K562 (cell line): ENCODE measurements at regions of chr10 and their contacts with region 1.

Region 1: DNA sequence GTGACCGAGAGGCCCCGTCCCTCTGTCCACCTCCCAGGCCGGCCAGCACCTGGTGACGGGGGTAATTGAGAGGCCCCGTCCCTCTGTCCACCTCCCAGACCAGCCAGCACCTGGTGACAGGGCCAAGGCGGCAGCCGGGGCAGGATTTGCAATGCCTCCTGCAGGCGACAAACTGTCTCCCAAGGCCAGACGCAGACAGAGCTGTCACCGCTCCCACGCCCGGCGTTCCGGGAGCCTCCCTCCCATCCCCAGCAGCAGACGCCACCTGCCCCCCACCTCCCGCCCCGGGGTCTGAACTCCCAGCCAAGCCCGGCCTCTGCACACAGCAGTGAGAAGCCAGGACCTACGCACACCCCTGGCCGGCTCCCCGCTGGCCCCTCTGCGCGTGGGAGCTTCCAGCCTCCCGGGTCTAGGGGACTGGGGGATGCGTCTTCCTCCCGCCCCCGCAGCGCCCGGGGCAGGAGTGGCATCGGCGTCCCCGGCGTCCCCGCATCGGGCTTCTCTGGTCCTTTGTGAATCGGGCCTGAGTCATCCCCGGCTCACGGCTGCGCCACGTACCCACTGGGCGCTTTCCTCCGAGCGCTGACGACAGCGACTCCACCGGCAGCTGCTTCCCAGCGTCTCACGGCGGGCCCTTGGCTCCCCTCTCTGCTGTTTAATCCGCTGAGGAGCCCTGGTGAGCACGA is 95.1 kb upstream of the DIP2C start:
- DNase-seq: peak in 3 of 4 experiments; percentile 13 to 45 (median 45)
- ATAC-seq: no peak
- H3K4me3 ChIP-seq: no peak overlapping the region
- H3K27ac ChIP-seq: no peak overlapping the region
- H3K4me1 ChIP-seq: peaks cover 3 to 45% of the 10 kb centered on the region in 2 experiments; a peak in 3 of 5 replicates
- H3K27me3 ChIP-seq: peaks cover 41 to 84% of the 10 kb centered on the region in 2 experiments; a peak in 4 of 5 replicates
- CTCF ChIP-seq: no peak
- EP300 ChIP-seq: no peak
- POLR2A ChIP-seq: no peak
- RAD21 ChIP-seq: no peak

Region 2: DNA sequence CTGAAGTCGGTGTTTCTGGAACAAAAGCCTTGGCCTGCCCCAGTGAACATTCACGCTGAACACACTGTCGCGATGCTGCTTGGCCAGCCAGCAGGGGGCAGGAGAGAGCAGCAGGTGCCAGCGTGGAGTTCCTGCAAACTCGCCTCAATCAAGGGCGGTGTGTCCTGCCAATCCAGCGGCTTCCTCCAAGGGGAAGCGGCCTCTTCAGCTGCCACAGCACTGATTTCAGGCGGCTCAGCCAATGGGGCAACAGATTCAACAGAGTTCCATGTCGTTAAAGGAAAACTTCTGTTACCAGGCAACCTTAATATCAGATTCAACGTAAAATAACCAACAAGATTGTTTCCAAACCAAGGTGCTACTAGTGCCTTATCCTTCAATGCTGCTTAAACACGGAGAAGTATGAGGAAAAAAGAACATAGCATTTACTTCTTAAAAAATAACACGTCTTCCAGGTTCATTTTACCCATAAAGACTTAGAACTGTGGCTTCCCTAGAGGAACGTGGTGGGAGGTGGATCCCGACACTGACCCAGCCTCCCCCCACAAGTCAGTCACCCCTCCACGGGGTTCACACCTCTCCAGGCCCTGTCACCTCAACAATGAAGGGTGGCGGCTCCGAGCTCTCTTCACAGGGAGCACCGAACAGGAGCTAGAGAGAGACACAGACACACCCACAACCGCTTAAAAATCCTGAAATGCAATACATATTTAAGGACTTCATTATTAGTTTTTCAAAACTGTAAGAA is 273.3 kb before region 1 on chr10:
- CTCF ChIA-PET with region 1: interaction called, 9 read pairs
- POLR2A ChIA-PET with region 1: no interaction called
- in situ Hi-C with region 1: no loop called
- intact Hi-C with region 1: loop called (anchors 1 kb)
- DNase-seq: peak; percentile 73 to 84 (median 80)
- ATAC-seq: peak; percentile 97
- H3K4me3 ChIP-seq: no peak overlapping the region
- H3K27ac ChIP-seq: no peak overlapping the region
- H3K4me1 ChIP-seq: peaks cover 0 to 3% of the 10 kb centered on the region in 2 experiments; a peak in 1 of 5 replicates
- H3K27me3 ChIP-seq: peaks cover 39 to 73% of the 10 kb centered on the region in 2 experiments; a peak in 4 of 5 replicates
- CTCF ChIP-seq: peak; percentile 86 to 92 (median 87)
- EP300 ChIP-seq: no peak
- POLR2A ChIP-seq: no peak
- RAD21 ChIP-seq: peak; percentile 75 to 85

Region 3: GRCh38 chr10:593901-594457 is 190.6 kb before region 1 on chr10:
- CTCF ChIA-PET with region 1: no interaction called
- POLR2A ChIA-PET with region 1: no interaction called
- in situ Hi-C with region 1: no loop called
- intact Hi-C with region 1: loop called (anchors 5 kb)
- DNase-seq: no peak
- ATAC-seq: peak; percentile 55; the same call in 2 of the 3 replicates
- H3K4me3 ChIP-seq: no peak overlapping the region
- H3K27ac ChIP-seq: no peak overlapping the region
- H3K4me1 ChIP-seq: no peaks in the 10 kb centered on the region; a peak in 1 of 5 replicates
- H3K27me3 ChIP-seq: peaks cover 42 to 82% of the 10 kb centered on the region in 2 experiments
- CTCF ChIP-seq: no peak
- EP300 ChIP-seq: no peak
- POLR2A ChIP-seq: no peak
- RAD21 ChIP-seq: no peak

Region 4: DNA sequence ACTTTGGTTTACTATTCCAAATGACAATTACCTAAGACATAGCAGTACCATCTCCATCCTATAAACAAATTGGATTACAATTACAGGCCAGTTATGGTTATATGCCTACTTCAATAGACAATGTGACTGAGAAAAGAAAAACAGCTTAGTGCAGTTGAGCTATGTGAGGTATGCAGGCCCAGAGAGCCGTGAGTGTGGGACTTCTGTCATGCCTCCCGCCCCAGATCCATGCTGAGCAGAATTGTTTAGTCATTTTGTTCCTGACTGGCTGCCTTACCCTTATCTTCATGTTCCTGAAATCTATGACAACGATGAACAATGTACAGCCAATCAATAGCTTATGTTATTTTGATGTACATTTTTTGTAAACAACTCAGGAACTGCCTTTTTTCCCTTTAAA is 125.3 kb after region 1 on chr10:
- CTCF ChIA-PET with region 1: no interaction called
- POLR2A ChIA-PET with region 1: no interaction called
- in situ Hi-C with region 1: no loop called
- intact Hi-C with region 1: no loop called
- DNase-seq: peak in 1 of 4 experiments; percentile 20
- ATAC-seq: peak; percentile 52
- H3K4me3 ChIP-seq: no peak overlapping the region
- H3K27ac ChIP-seq: no peak overlapping the region
- H3K4me1 ChIP-seq: peaks cover 0 to 5% of the 10 kb centered on the region in 2 experiments; a peak in 3 of 5 replicates
- H3K27me3 ChIP-seq: no peaks in the 10 kb centered on the region
- CTCF ChIP-seq: no peak
- EP300 ChIP-seq: no peak
- POLR2A ChIP-seq: no peak
- RAD21 ChIP-seq: no peak